ENCODE measurements at regions of chr3 and their contacts with region 1.

Region 1: DNA sequence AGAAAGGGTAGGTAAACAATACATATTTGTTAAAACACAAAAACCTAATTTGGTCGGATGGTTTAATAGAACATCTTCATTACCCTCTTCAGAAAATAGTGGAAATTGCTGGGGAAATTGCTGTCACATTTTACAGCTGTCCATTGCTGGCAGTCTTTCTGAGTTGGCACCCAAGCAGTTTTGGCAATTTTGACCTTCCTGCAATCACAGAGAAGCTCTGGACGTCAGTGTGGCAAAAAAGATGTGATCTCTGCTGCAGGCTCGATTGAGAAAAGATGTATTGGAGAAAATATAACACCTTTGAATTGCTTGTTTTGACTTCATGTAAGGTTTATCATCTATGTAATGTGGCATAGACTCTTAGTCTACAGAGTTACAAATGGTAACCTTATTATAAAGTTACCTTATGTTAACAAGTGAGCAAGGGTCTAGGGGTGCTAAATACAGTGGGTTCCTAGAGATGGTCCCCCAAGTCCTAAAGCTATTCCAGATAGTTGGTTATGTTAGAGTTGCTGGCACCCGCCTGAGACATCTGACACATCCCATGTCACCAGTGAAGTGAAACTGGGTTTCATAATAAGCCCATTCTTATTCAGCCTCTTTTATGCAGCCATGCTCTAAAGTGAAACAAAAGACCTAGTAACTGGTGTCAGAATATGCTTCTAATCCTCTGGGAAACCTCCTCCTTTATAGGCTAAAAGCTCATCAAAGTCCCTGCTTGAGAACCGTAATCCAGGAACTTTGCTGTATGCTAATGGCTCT is 14.0 kb downstream of the UBE2E1 start:
- DNase-seq: peak in 6 of 10 donors; percentile 35 to 75 (median 57)
- H3K4me3 ChIP-seq: peak overlapping the region in 30 of 59 donors; percentile 1 to 49 (median 18)
- H3K27ac ChIP-seq: peak overlapping the region; percentile 7 to 93 (median 86)
- H3K27me3 ChIP-seq: no peaks in the 10 kb centered on the region
- CTCF ChIP-seq: peak in 2 of 56 donors; percentile 13 to 29

Region 2: DNA sequence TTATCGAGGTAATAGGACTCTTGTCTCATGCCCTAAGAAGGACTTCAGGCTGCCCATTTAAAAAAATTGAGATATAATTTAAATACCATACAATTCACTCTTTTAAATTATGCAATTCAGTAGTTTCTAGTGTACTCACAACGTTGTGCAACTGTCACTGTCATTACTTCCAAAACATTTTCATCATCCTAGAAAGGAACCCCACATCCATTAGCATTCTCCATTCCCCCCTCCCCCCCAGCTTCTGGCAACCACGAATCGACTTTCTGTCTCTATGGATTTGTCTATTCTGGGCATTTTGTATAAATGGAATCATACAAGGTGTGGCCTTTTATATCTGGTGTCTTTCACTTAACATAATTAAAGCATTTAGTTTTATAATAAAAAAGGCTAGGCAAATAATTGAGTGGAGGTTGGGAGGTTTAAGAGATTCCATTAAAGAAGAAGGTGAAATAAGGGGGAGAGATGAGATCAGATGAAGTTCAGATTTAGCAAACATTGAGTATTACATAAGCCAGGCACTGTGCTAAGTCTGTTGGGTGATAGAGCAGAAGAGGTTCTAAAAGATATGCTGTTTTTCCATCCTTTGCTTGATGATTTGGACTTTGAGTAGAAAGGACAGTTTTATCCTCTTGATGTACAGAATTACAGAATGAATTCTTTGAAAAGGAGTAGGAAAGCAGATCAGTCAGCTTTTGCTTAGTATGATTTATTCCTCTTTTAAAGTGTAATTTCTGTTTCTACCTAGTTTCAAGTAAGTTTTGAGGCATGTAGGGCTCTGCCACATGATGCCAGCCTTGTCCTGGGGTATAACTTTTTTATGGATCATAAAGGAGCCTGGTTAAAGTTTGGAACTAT is 580.3 kb before region 1 on chr3:
- intact Hi-C with region 1: no loop called
- DNase-seq: no peak
- H3K4me3 ChIP-seq: peak overlapping the region in 1 of 59 donors; percentile 5
- H3K27ac ChIP-seq: peak overlapping the region in 55 of 59 donors; percentile 6 to 94 (median 80)
- H3K27me3 ChIP-seq: no peaks in the 10 kb centered on the region
- CTCF ChIP-seq: no peak

Region 3: DNA sequence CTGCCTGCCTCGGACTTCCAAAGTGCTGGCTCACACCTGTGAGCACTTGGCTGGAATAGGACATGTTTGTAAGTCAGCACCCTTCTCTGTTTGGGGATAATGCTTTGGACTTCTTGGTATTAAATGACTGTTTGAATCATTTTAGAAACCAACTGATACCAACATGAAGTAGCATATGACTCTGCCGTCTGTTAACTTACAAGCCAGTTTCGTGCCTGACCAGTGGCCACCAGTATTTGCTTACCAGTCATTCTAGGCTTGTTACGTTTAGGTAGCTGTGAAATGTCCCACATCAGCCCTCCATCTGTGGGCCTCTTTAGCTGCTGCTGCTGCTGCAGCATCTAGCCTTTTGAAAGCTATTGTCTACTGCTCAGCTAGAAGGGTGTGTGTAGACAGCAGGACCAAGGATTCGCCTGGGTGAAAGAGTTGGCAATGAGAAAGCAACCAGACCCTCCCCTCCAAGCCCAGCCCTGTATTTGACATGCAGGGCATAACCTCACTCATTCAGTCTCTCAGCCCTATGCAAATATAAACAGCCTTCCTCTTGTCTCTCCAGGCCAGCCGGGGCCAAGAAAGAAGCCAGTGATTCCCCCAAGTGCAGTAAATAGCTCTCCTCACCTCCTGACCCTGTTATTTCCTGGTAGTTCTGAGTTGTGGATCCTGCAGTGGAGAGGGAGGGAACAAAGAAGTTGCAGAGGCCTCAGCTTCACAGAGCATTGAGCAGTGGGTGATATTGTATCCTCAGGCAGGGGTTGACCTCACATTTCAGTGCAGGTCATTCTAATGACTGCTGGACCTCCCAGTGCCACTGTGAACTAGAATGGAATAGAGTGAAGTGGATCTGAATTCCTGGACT is 46.0 kb after region 1 on chr3:
- intact Hi-C with region 1: loop called in 1 of 2 experiments (anchors 5 kb)
- DNase-seq: peak in 5 of 10 donors; percentile 14 to 56 (median 50)
- H3K4me3 ChIP-seq: peak overlapping the region in 2 of 59 donors; percentile 15 to 23
- H3K27ac ChIP-seq: peak overlapping the region in 57 of 59 donors; percentile 8 to 88 (median 70)
- H3K27me3 ChIP-seq: no peaks in the 10 kb centered on the region
- CTCF ChIP-seq: no peak

Region 4: DNA sequence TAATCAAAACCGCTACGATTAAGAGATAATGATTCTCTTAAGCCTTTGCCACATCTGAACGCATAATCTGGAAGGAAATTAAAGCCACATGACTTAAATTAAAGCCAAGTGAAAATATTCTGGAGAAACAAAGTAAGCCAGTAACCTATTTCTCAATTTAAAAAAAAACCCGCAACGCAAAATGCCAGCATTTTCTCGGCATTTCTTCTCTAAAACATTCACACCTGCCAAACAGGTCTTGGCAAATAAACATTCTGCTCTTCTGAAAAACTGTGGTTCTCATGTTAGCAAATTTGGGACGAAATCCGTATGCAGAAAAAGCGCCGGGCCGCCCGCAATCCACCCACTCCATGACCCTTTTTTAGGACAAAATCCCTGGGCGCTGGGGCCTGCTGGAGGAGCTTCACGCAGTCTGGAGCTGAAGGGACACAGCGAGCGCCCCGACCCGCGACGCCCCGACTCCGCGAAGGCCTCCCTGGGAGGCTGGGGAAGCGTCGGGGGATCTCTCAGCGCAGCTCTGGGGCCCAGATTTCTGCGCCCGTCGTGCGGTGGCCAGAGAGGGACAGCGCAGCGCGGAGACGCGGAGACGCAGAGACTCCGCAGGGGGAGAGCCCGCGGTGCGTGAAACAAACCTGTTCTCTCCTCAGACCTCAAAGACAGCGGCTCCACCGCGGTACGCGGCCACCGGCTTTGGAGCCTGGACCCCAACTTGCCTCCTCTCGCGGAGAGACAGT is 96.5 kb after region 1 on chr3:
- intact Hi-C with region 1: no loop called
- DNase-seq: peak in 3 of 10 donors; percentile 15 to 65 (median 50)
- H3K4me3 ChIP-seq: peak overlapping the region; percentile 64 to 99 (median 91)
- H3K27ac ChIP-seq: peak overlapping the region; percentile 58 to 98 (median 92)
- H3K27me3 ChIP-seq: no peaks in the 10 kb centered on the region
- CTCF ChIP-seq: no peak

Region 5: DNA sequence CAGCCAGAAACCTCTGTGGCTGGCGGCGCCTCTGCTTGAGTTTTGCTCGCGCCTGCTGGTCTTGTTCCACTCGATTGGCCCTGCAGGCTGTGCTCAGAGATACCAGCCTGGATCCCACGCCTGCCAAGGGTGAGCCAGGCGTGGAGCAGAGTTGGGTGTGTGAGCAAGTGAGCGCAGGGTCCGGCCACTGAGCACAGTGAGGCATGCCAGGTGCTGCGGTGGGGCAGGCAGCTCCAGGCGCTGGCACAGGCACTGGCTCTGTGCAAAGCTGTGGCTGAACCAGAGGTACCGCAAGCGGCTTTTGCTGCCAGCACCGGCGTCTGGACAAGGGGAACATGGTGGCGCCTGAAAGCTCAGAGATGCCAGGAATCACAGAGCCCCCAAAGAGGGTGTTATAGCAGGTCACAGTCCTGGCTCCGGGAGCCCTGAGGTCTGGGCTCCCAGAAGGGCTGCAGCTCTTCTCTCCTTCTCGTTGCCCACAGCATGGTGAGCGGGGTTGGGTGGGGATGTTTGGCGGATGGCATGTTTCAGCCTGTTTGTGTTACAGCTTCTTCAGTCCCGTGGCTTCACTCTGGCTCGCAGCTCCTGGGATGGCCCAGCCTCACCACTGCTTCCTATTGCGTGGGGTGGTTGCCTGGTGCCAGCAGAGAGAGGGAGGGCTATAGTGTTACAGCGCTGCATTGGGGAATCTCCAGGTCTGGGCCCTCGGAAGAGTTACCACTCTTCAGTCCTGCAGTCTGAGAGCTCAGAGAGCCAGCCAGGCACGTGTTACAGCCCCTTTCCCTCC is 199.2 kb after region 1 on chr3:
- intact Hi-C with region 1: no loop called
- DNase-seq: no peak
- H3K4me3 ChIP-seq: no peak overlapping the region
- H3K27ac ChIP-seq: no peak overlapping the region
- H3K27me3 ChIP-seq: no peaks in the 10 kb centered on the region
- CTCF ChIP-seq: no peak

Measured in dorsolateral prefrontal cortex (tissue), 120 donors.